Activated B cell treated with CpG ODN at 0.5 μM for 24 hours (primary cell): ENCODE measurements at regions of chr5 and their contacts with region 1.

Region 1: GRCh38 chr5:138575194-138576015 is at the start of gene HSPA9:
- DNase-seq: peak; percentile 92
- ATAC-seq: peak; percentile 86
- H3K4me3 Mint-ChIP-seq: peak within 1 kb of the TSS; percentile 92
- H3K27ac Mint-ChIP-seq: peak within 1 kb of the TSS; percentile 100
- H3K4me1 Mint-ChIP-seq: peaks cover 26% of the 10 kb centered on the region
- H3K27me3 Mint-ChIP-seq: no peaks in the 10 kb centered on the region
- CTCF ChIP-seq: no peak
- total RNA-seq, gene HSPA9: 223 and 224 TPM in 2 replicates

Region 2: GRCh38 chr5:137754126-137754960 is 821.1 kb before region 1 on chr5 and contains the start of gene HNRNPA0:
- CTCF ChIA-PET with region 1: no interaction called
- POLR2A ChIA-PET with region 1: interaction called, 3 read pairs
- intact Hi-C with region 1: loop called (anchors 1 kb)
- DNase-seq: peak; percentile 95
- ATAC-seq: peak; percentile 82
- H3K4me3 Mint-ChIP-seq: peak within 1 kb of the TSS; percentile 95
- H3K27ac Mint-ChIP-seq: peak within 1 kb of the TSS; percentile 100
- H3K4me1 Mint-ChIP-seq: peaks cover 35% of the 10 kb centered on the region
- H3K27me3 Mint-ChIP-seq: no peaks in the 10 kb centered on the region
- CTCF ChIP-seq: no peak
- total RNA-seq, gene HNRNPA0: 31.2 and 34.7 TPM in 2 replicates

Region 3: GRCh38 chr5:138337685-138338410 is 237.6 kb before region 1 on chr5 and contains the start of gene FAM53C:
- CTCF ChIA-PET with region 1: no interaction called
- POLR2A ChIA-PET with region 1: no interaction called
- intact Hi-C with region 1: loop called (anchors 1 kb)
- DNase-seq: peak; percentile 97
- ATAC-seq: peak; percentile 81
- H3K4me3 Mint-ChIP-seq: peak within 1 kb of the TSS; percentile 90
- H3K27ac Mint-ChIP-seq: peak within 1 kb of the TSS; percentile 100
- H3K4me1 Mint-ChIP-seq: peaks cover 37% of the 10 kb centered on the region
- H3K27me3 Mint-ChIP-seq: no peaks in the 10 kb centered on the region
- CTCF ChIP-seq: no peak
- total RNA-seq, gene FAM53C: 23.5 and 24.9 TPM in 2 replicates

Region 4: GRCh38 chr5:138491669-138492559 is 83.5 kb before region 1 on chr5:
- CTCF ChIA-PET with region 1: no interaction called
- POLR2A ChIA-PET with region 1: no interaction called
- intact Hi-C with region 1: loop called (anchors 1 kb)
- DNase-seq: peak; percentile 77
- ATAC-seq: peak; percentile 100
- H3K4me3 Mint-ChIP-seq: peak overlapping the region; percentile 87
- H3K27ac Mint-ChIP-seq: no peak overlapping the region
- H3K4me1 Mint-ChIP-seq: peaks cover 4% of the 10 kb centered on the region
- H3K27me3 Mint-ChIP-seq: peaks cover 24% of the 10 kb centered on the region
- CTCF ChIP-seq: no peak

Region 5: DNA sequence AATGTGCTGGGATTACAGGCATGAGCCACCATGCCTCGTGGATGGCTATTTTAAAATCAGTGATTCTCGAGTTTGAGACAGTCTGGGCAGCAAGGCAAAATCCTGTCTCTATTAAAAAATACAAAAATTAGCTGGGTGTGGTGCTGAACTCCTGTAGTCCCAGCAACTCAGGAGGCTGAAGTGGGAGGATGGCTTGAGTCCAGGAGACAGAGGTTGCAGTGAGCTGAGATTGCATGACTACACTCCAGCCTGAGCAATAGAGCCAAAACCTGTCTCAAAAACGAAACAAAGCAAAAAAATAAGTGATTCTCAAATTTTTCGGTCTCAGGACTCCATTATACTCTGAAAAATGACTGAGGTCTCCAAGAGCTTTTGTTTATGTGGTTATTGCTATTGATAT is 47.6 kb after region 1 on chr5:
- CTCF ChIA-PET with region 1: no interaction called
- POLR2A ChIA-PET with region 1: no interaction called
- intact Hi-C with region 1: no loop called
- DNase-seq: no peak
- ATAC-seq: no peak
- H3K4me3 Mint-ChIP-seq: no peak overlapping the region
- H3K27ac Mint-ChIP-seq: no peak overlapping the region
- H3K4me1 Mint-ChIP-seq: no peaks in the 10 kb centered on the region
- H3K27me3 Mint-ChIP-seq: peaks cover 11% of the 10 kb centered on the region
- CTCF ChIP-seq: no peak

Region 6: GRCh38 chr5:138772986-138773594 is 197.7 kb after region 1 on chr5:
- CTCF ChIA-PET with region 1: no interaction called
- POLR2A ChIA-PET with region 1: no interaction called
- intact Hi-C with region 1: no loop called
- DNase-seq: no peak
- ATAC-seq: no peak
- H3K4me3 Mint-ChIP-seq: no peak overlapping the region
- H3K27ac Mint-ChIP-seq: no peak overlapping the region
- H3K4me1 Mint-ChIP-seq: no peaks in the 10 kb centered on the region
- H3K27me3 Mint-ChIP-seq: no peaks in the 10 kb centered on the region
- CTCF ChIP-seq: no peak

Region 7: GRCh38 chr5:138784590-138784989 is 209.2 kb after region 1 on chr5:
- CTCF ChIA-PET with region 1: interaction called, 3 read pairs
- POLR2A ChIA-PET with region 1: interaction called, 11 read pairs
- intact Hi-C with region 1: no loop called
- DNase-seq: no peak
- ATAC-seq: no peak
- H3K4me3 Mint-ChIP-seq: no peak overlapping the region
- H3K27ac Mint-ChIP-seq: no peak overlapping the region
- H3K4me1 Mint-ChIP-seq: peaks cover under 1% of the 10 kb centered on the region
- H3K27me3 Mint-ChIP-seq: no peaks in the 10 kb centered on the region
- CTCF ChIP-seq: no peak

Region 8: GRCh38 chr5:139273572-139274289 is 698.3 kb after region 1 on chr5:
- CTCF ChIA-PET with region 1: interaction called, 3 read pairs
- POLR2A ChIA-PET with region 1: interaction called, 14 read pairs
- intact Hi-C with region 1: no loop called
- DNase-seq: peak; percentile 93
- ATAC-seq: peak; percentile 96
- H3K4me3 Mint-ChIP-seq: peak overlapping the region; percentile 90
- H3K27ac Mint-ChIP-seq: peak overlapping the region; percentile 91
- H3K4me1 Mint-ChIP-seq: peaks cover 52% of the 10 kb centered on the region
- H3K27me3 Mint-ChIP-seq: no peaks in the 10 kb centered on the region
- CTCF ChIP-seq: no peak

Region 9: GRCh38 chr5:139392678-139393496 is 817.5 kb after region 1 on chr5:
- CTCF ChIA-PET with region 1: no interaction called
- POLR2A ChIA-PET with region 1: interaction called, 3 read pairs
- intact Hi-C with region 1: loop called (anchors 1 kb)
- DNase-seq: peak; percentile 89
- ATAC-seq: peak; percentile 62
- H3K4me3 Mint-ChIP-seq: peak overlapping the region; percentile 94
- H3K27ac Mint-ChIP-seq: peak overlapping the region; percentile 86
- H3K4me1 Mint-ChIP-seq: peaks cover 39% of the 10 kb centered on the region
- H3K27me3 Mint-ChIP-seq: no peaks in the 10 kb centered on the region
- CTCF ChIP-seq: no peak